Activated CD8-positive, alpha-beta T cell treated with anti-CD3 and anti-CD28 coated beads for 36 hours (primary cell): ENCODE measurements at regions of chr2 and their contacts with region 1.

Region 1: DNA sequence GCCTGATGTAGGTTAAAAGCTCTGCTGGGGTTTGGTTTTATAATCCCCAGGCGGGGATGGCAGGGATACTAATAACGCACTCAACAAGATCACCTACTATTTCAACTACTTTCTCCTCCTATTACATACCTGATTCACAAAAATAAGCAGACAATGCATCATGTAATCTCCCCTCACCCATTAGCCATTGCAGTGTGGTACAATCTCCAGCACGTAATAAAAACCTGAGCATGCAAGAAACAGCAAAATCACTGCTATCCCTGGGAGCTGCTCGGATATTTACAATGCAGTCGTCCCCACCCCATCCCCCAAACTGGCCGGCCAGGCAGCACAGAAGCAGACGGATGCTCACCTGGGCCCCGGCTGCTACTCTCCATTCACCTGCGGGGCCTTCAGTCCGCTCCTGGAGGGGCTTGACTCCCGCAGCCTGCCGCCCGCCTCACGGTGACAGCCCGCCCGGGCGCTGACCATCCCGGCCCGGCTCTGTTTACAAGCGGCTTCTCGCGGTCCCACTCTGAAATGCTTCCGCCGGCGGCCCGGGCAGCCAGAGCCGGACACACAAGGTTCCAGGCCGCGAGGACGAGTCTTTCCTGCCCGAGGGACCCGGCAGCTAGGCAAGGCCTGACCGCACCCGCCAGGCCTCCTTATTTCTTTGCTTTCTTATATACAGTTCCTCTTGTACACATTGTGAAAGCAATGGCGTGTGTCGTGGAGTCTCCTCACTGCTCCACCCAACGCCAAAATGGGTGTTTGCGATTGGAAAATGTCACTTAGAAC is at the start of gene PLEKHM3:
- DNase-seq: peak; percentile 82
- ATAC-seq: peak; percentile 86
- H3K4me3 Mint-ChIP-seq: peak within 1 kb of the TSS; percentile 83
- H3K27ac Mint-ChIP-seq: peak within 1 kb of the TSS; percentile 93
- H3K4me1 Mint-ChIP-seq: peaks cover 18% of the 10 kb centered on the region
- H3K27me3 Mint-ChIP-seq: no peaks in the 10 kb centered on the region
- CTCF ChIP-seq: no peak
- total RNA-seq, gene PLEKHM3: 4.5 to 4.7 TPM

Region 2: GRCh38 chr2:207769597-207770486 is 255.4 kb before region 1 on chr2 and contains the start of gene FZD5:
- CTCF ChIA-PET with region 1: interaction called, 4 read pairs
- POLR2A ChIA-PET with region 1: no interaction called
- intact Hi-C with region 1: loop called (anchors 5 kb)
- DNase-seq: peak; percentile 92
- ATAC-seq: peak; percentile 89
- H3K4me3 Mint-ChIP-seq: peak within 1 kb of the TSS; percentile 86
- H3K27ac Mint-ChIP-seq: peak within 1 kb of the TSS; percentile 16
- H3K4me1 Mint-ChIP-seq: peaks cover 24% of the 10 kb centered on the region
- H3K27me3 Mint-ChIP-seq: peaks cover 34% of the 10 kb centered on the region
- CTCF ChIP-seq: peak; percentile 69
- total RNA-seq, gene FZD5: 1.7 TPM